CD8-positive, alpha-beta T cell (primary cell): ENCODE measurements at regions of chr11 and their contacts with region 1.

Region 1: DNA sequence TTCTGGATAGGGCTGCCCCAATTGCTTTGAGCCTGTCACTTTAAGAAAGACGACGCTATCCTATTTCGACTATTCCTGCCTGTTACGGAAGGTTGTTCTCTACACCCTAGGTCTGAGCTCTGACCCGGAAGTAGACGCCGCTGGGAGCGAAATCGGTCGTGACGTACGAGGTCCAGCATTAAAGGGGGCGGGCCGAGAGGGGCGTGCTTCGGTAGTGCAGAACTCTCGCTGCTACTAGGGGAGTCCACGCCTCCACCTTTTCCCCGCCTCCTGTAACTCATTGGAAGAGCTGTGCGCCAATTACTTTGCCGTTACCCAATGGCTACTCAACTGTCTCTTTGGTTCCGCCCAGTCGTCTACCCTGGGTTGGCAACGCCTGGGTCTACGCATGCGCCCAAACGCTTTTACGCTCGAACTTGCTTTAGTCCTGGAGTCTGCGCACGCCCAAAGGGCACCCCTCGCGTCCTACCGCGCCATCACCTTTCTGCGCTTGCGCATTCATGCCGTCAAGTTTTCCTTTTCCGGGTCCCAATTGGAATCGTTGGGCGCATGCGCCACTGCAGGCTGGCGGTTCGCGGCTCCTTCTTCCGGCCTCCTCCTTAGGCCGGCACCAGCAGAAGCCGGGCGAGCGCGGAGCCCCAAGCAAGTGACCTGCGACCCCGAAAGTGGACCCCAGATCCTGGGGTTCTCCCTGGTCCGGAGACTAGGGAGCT is at the start of gene PCNX3:
- DNase-seq: peak; percentile 99 to 100 (median 100)
- ATAC-seq: peak; percentile 88
- H3K4me3 ChIP-seq: peak within 1 kb of the TSS; percentile 78 to 89
- H3K4me3 Mint-ChIP-seq: peak within 1 kb of the TSS; percentile 96
- H3K27ac ChIP-seq: peak within 1 kb of the TSS; percentile 92 to 97
- H3K27ac Mint-ChIP-seq: peak within 1 kb of the TSS; percentile 96
- H3K4me1 ChIP-seq: peaks cover 46% of the 10 kb centered on the region
- H3K4me1 Mint-ChIP-seq: peaks cover 45% of the 10 kb centered on the region
- H3K27me3 ChIP-seq: no peaks in the 10 kb centered on the region
- H3K27me3 Mint-ChIP-seq: no peaks in the 10 kb centered on the region
- CTCF ChIP-seq: no peak
- total RNA-seq, gene PCNX3: 52.7 to 56.4 TPM

Region 2: DNA sequence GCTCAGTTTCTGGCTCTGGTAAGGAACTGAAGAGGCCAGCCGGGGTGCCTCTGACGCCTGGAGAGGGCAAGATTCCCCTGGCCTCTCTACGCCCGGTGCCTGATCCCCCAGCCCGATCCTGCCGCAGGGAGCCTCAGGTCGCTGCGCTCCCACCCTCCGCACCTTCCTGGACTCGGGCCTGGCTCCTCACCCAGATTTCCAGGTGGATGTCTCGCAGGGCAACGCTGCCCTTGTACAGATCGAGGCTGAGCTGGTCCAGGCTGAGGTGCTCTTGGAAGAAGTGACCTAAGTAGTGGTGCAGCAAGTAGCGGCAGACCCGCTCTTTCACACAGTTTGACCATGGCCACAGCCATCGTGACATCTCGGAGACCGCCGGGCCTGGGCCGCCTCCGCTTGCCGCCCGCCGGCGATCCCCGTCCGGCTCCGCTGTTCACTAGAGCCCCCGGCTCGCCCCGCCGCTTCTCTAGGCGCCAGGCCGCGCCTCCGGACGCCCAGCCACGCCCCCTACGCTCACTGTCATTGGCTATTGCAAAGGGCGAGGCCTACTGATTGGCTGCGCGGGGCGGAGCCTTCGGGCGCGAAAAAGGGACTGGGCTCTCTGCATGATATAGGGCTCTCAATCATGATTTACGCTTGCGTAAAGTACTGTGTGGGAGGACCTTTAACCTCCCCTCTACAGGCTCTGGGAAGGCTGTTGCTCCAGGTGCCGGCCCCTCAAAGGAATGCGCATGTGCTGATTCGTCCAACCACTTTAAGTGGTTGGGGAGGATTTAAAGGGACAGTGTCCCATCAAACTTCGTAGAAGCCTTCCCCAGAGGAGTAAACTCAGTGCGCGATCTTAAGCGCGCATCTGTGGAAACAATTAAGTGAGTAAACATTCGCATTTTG is 698.4 kb before region 1 on chr11 and contains the start of gene ATG2A:
- CTCF ChIA-PET with region 1: no interaction called
- POLR2A ChIA-PET with region 1: no interaction called
- intact Hi-C with region 1: loop called (anchors 2 to 10 kb)
- DNase-seq: peak; percentile 98 to 100 (median 99)
- ATAC-seq: peak; percentile 96
- H3K4me3 ChIP-seq: peak within 1 kb of the TSS; percentile 76 to 79
- H3K4me3 Mint-ChIP-seq: peak within 1 kb of the TSS; percentile 94
- H3K27ac ChIP-seq: peak within 1 kb of the TSS; percentile 77 to 93
- H3K27ac Mint-ChIP-seq: peak within 1 kb of the TSS; percentile 94
- H3K4me1 ChIP-seq: peaks cover 26% of the 10 kb centered on the region
- H3K4me1 Mint-ChIP-seq: peaks cover 22% of the 10 kb centered on the region
- H3K27me3 ChIP-seq: no peaks in the 10 kb centered on the region
- H3K27me3 Mint-ChIP-seq: no peaks in the 10 kb centered on the region
- CTCF ChIP-seq: no peak
- total RNA-seq, gene ATG2A: 285 to 311 TPM

Region 3: GRCh38 chr11:65340226-65340625 is 275.2 kb before region 1 on chr11:
- CTCF ChIA-PET with region 1: no interaction called
- POLR2A ChIA-PET with region 1: no interaction called
- intact Hi-C with region 1: no loop called
- DNase-seq: no peak
- ATAC-seq: no peak
- H3K4me3 ChIP-seq: no peak overlapping the region
- H3K4me3 Mint-ChIP-seq: no peak overlapping the region
- H3K27ac ChIP-seq: no peak overlapping the region
- H3K27ac Mint-ChIP-seq: no peak overlapping the region
- H3K4me1 ChIP-seq: peaks cover 11% of the 10 kb centered on the region
- H3K4me1 Mint-ChIP-seq: peaks cover 36% of the 10 kb centered on the region
- H3K27me3 ChIP-seq: no peaks in the 10 kb centered on the region
- H3K27me3 Mint-ChIP-seq: no peaks in the 10 kb centered on the region
- CTCF ChIP-seq: no peak

Region 4: DNA sequence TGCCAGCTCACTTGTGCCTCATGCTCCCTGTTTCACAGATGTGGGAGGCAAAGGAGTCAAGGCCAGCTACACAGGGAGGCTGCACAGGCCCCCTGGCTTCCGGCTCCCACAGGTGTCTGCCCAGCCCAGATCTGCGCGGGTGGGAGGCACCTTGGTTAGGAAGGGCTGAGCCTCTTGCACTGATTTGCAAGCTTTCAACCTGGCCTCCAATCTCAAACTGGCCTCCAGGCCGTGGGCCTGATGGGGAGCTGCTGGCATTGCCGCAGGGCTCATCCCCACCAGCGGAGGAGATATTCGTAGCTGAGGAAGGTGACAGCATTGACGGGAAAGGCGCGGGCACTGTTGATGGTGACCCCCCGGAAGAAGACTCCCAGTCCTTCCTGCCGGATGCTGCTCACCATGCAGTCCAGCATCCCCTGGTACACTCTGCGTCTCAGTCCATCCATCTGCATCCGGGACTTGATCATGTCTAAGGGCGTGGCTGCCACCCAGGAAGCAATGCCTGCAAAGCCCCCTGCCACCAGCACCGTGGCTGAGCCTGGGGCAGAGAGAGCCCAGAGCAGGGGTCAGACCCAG is 239.2 kb before region 1 on chr11:
- CTCF ChIA-PET with region 1: no interaction called
- POLR2A ChIA-PET with region 1: no interaction called
- intact Hi-C with region 1: no loop called
- DNase-seq: peak in 1 of 9 experiments; percentile 8
- ATAC-seq: no peak
- H3K4me3 ChIP-seq: no peak overlapping the region
- H3K4me3 Mint-ChIP-seq: no peak overlapping the region
- H3K27ac ChIP-seq: no peak overlapping the region
- H3K27ac Mint-ChIP-seq: peak overlapping the region; percentile 13
- H3K4me1 ChIP-seq: peaks cover 6% of the 10 kb centered on the region
- H3K4me1 Mint-ChIP-seq: no peaks in the 10 kb centered on the region
- H3K27me3 ChIP-seq: no peaks in the 10 kb centered on the region
- H3K27me3 Mint-ChIP-seq: no peaks in the 10 kb centered on the region
- CTCF ChIP-seq: no peak

Region 5: GRCh38 chr11:65524741-65525545 is 90.4 kb before region 1 on chr11 and contains the start of gene SCYL1:
- CTCF ChIA-PET with region 1: no interaction called
- POLR2A ChIA-PET with region 1: interaction called, 8 read pairs
- intact Hi-C with region 1: loop called in 1 of 2 experiments (anchors 1 kb)
- DNase-seq: peak; percentile 77 to 92 (median 83)
- ATAC-seq: peak; percentile 93
- H3K4me3 ChIP-seq: peak within 1 kb of the TSS; percentile 73 to 89
- H3K4me3 Mint-ChIP-seq: peak within 1 kb of the TSS; percentile 84
- H3K27ac ChIP-seq: peak within 1 kb of the TSS; percentile 53 to 68
- H3K27ac Mint-ChIP-seq: peak within 1 kb of the TSS; percentile 91
- H3K4me1 ChIP-seq: peaks cover 60% of the 10 kb centered on the region
- H3K4me1 Mint-ChIP-seq: peaks cover 52% of the 10 kb centered on the region
- H3K27me3 ChIP-seq: no peaks in the 10 kb centered on the region
- H3K27me3 Mint-ChIP-seq: no peaks in the 10 kb centered on the region
- CTCF ChIP-seq: no peak
- total RNA-seq, gene SCYL1: 55.8 to 60.4 TPM

Region 6: GRCh38 chr11:65552413-65553068 is 62.8 kb before region 1 on chr11:
- CTCF ChIA-PET with region 1: no interaction called
- POLR2A ChIA-PET with region 1: no interaction called
- intact Hi-C with region 1: no loop called
- DNase-seq: no peak
- ATAC-seq: no peak
- H3K4me3 ChIP-seq: no peak overlapping the region
- H3K4me3 Mint-ChIP-seq: peak overlapping the region; percentile 17
- H3K27ac ChIP-seq: no peak overlapping the region
- H3K27ac Mint-ChIP-seq: peak overlapping the region; percentile 57
- H3K4me1 ChIP-seq: peaks cover 77% of the 10 kb centered on the region
- H3K4me1 Mint-ChIP-seq: peaks cover 76% of the 10 kb centered on the region
- H3K27me3 ChIP-seq: no peaks in the 10 kb centered on the region
- H3K27me3 Mint-ChIP-seq: no peaks in the 10 kb centered on the region
- CTCF ChIP-seq: peak; percentile 7

Region 7: DNA sequence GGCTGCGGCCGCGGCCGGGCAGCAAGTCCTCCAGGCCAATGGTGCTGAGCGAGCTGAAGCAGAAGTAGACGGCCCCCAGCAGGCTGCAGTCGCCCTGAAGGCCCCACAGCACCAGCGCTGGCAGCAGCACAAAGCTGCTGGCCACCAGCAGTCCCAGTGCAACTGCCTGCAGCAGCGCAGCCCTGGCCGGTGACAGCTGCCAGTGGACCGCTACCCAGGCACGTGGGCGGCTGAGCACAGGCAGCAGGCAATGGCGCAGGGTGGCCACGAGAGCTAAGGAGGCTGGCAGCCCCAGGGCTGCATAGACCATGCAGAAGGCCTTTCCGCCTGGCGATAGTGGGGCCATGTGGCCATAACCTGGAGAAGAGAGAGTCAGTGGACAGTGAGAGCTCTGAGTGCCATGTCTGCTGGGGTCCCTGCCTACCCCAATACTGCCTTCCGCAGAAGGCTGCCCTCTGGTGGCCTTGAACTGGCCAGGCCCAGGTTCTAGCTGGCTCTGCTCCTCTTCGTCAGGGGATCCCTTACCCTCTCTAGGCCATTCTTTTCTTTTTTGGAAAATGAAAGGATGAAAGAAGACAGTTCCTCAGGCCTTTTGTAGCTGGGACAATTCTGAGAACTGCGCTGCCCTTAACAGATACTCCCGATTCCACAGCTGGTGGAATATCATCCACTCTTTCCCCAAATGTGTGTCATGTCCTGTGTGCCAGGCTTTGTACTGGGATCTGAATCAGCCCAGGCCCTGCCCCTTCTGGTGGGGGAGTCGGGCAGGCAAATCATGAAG is 21.7 kb before region 1 on chr11:
- CTCF ChIA-PET with region 1: interaction called, 34 read pairs
- POLR2A ChIA-PET with region 1: interaction called, 5 read pairs
- intact Hi-C with region 1: no loop called
- DNase-seq: peak in 7 of 9 experiments; percentile 48 to 74 (median 64)
- ATAC-seq: peak; percentile 56
- H3K4me3 ChIP-seq: no peak overlapping the region
- H3K4me3 Mint-ChIP-seq: no peak overlapping the region
- H3K27ac ChIP-seq: no peak overlapping the region
- H3K27ac Mint-ChIP-seq: no peak overlapping the region
- H3K4me1 ChIP-seq: peaks cover 12% of the 10 kb centered on the region
- H3K4me1 Mint-ChIP-seq: peaks cover 11% of the 10 kb centered on the region
- H3K27me3 ChIP-seq: no peaks in the 10 kb centered on the region
- H3K27me3 Mint-ChIP-seq: no peaks in the 10 kb centered on the region
- CTCF ChIP-seq: peak; percentile 59

Region 8: DNA sequence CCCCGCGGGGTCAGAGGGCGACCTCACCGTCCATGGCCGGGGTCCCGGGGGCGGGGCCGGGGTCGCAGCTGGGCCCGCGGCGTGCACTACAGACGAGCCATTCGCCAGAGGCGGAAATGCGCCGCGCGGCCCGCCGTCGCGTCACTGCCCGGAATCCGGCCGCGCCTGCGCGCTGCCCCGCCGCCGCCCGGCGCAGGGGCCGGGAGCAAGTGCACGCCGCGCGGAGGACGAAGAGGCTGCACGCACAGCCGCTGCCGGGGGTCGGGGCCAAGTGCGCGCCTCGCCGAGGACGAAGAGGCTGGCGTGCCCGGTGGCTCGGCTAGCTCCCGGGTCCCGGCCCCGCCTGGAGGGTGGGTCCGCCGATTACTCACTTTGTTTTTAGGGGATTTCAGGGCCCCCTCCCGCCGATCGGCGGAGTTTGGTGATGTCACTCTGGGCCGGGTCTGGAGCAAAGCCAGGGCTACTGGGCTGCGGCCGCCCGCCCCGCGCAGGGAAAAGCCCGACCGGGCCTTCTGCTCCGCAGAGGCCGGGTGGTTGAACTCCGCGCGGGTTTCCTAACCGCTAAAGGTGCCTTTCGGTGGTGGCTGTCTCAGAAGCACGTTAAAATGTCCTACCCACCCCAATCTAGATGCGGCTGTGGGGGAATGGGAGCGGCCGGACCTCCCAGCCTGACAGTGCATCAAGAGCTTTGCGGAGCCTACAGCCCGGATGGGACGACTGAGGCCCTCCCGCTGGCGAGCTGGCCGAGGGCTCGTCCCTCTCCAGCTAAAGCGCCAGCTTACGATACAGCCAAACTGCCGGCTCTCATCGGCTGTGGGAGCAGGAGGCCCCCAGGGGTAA is 47.6 kb after region 1 on chr11 and contains the start of gene RELA:
- CTCF ChIA-PET with region 1: interaction called, 3 read pairs
- POLR2A ChIA-PET with region 1: interaction called, 16 read pairs
- intact Hi-C with region 1: loop called (anchors 1 kb)
- DNase-seq: peak; percentile 79 to 95 (median 89)
- ATAC-seq: peak; percentile 83
- H3K4me3 ChIP-seq: peak within 1 kb of the TSS; percentile 77 to 88
- H3K4me3 Mint-ChIP-seq: peak within 1 kb of the TSS; percentile 86
- H3K27ac ChIP-seq: peak within 1 kb of the TSS; percentile 92 to 98
- H3K27ac Mint-ChIP-seq: peak within 1 kb of the TSS; percentile 92
- H3K4me1 ChIP-seq: peaks cover 27% of the 10 kb centered on the region
- H3K4me1 Mint-ChIP-seq: peaks cover 38% of the 10 kb centered on the region
- H3K27me3 ChIP-seq: no peaks in the 10 kb centered on the region
- H3K27me3 Mint-ChIP-seq: no peaks in the 10 kb centered on the region
- CTCF ChIP-seq: no peak
- total RNA-seq, gene RELA: 380 to 384 TPM

Region 9: DNA sequence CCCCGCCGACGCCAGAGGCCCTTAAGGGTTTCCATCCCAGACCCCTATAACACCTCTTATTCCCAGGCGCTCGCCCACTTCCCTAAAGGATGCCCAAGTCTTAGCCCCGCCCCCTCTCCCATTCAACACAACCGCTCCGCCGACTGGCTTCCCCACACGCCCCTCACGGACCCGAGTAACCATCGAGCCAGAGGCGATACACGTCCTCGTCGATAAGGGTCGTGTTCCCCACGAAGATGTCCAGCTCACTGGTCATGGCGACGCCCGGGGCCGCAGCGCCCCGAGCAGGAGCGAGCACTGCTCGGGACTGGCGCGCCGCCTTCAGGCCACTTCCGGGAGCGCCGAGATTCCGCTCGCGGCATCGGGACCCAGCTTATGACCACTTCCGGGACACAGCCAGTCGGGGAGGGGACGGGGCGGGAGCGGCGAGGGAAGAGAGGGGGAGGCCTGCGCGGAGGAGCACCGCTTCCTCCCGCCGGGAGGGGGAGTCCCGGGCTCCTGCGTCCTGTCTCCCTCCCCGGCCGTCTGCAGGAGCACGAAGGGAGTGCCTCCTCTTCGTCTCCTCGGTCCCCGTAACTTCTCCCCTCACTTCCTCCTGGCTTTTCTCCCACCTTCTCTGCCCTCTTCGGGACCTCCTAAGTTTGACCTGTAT is 272.9 kb after region 1 on chr11 and contains the start of gene FIBP:
- CTCF ChIA-PET with region 1: interaction called, 3 read pairs
- POLR2A ChIA-PET with region 1: interaction called, 10 read pairs
- intact Hi-C with region 1: loop called in 1 of 2 experiments (anchors 1 kb)
- DNase-seq: peak; percentile 89 to 98 (median 95)
- ATAC-seq: peak; percentile 57
- H3K4me3 ChIP-seq: peak within 1 kb of the TSS; percentile 57 to 87
- H3K4me3 Mint-ChIP-seq: peak within 1 kb of the TSS; percentile 83
- H3K27ac ChIP-seq: peak within 1 kb of the TSS; percentile 73 to 97
- H3K27ac Mint-ChIP-seq: peak within 1 kb of the TSS; percentile 98
- H3K4me1 ChIP-seq: peaks cover 48% of the 10 kb centered on the region
- H3K4me1 Mint-ChIP-seq: peaks cover 62% of the 10 kb centered on the region
- H3K27me3 ChIP-seq: no peaks in the 10 kb centered on the region
- H3K27me3 Mint-ChIP-seq: no peaks in the 10 kb centered on the region
- CTCF ChIP-seq: peak; percentile 71
- total RNA-seq, gene FIBP: 16.5 to 19.3 TPM

Region 10: DNA sequence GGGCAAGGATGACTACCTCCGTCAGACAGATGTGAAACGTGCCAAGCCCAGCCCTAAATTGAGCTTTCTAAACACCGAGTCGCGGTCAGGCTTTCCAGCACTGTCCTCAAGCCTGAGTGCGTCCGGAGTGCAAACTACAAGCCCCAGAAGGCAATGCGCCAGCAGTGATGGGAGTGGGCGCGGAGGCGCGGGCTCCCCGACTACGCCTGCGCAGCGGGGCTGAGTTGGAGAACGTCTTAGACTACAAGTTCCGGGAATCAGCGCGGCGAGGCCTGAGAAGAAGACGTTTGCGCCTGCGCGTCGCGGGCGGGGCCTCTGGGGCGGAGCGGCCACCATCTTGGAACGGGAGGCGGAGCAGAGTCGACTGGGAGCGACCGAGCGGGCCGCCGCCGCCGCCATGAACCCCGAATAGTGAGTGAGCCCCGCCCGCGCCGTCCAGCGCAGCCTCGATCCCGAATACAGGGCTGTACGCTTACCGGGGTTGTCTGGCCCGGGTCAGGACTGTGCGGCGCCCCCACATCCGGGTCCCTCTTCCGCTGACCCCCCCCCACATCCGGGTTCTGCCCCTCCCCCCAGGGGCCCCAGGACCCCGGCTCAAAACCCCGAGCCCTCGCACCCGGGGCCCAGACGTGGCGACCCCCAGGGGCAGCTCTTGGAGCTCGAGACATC is 653.0 kb after region 1 on chr11 and contains the start of gene RAB1B:
- CTCF ChIA-PET with region 1: no interaction called
- POLR2A ChIA-PET with region 1: no interaction called
- intact Hi-C with region 1: loop called (anchors 2 kb)
- DNase-seq: peak; percentile 99 to 100 (median 100)
- ATAC-seq: peak; percentile 75
- H3K4me3 ChIP-seq: peak within 1 kb of the TSS; percentile 89 to 97
- H3K4me3 Mint-ChIP-seq: peak within 1 kb of the TSS; percentile 97
- H3K27ac ChIP-seq: peak within 1 kb of the TSS; percentile 83 to 91
- H3K27ac Mint-ChIP-seq: peak within 1 kb of the TSS; percentile 97
- H3K4me1 ChIP-seq: peaks cover 43% of the 10 kb centered on the region
- H3K4me1 Mint-ChIP-seq: peaks cover 50% of the 10 kb centered on the region
- H3K27me3 ChIP-seq: no peaks in the 10 kb centered on the region
- H3K27me3 Mint-ChIP-seq: no peaks in the 10 kb centered on the region
- CTCF ChIP-seq: no peak
- total RNA-seq, gene RAB1B: 34.4 to 36.3 TPM